ENCODE measurements at regions of chr6 and their contacts with region 1.

Region 1: GRCh38 chr6:131063028-131063763 is at the start of gene EPB41L2:
- DNase-seq: peak; percentile 94
- H3K4me3 ChIP-seq: peak within 1 kb of the TSS; percentile 95
- H3K27ac ChIP-seq: peak within 1 kb of the TSS; percentile 49
- H3K4me1 ChIP-seq: peaks cover 24% of the 10 kb centered on the region
- CTCF ChIP-seq: 0 out of 2 replicates have a peak, but pooled peaks have one; percentile 13
- total RNA-seq, gene EPB41L2: 36.7 and 37.2 TPM in 2 replicates

Region 2: GRCh38 chr6:130958468-130958867 is 104.7 kb before region 1 on chr6:
- CTCF ChIA-PET with region 1: no interaction called
- POLR2A ChIA-PET with region 1: no interaction called
- intact Hi-C with region 1: no loop called
- DNase-seq: no peak
- H3K4me3 ChIP-seq: no peak overlapping the region
- H3K27ac ChIP-seq: no peak overlapping the region
- H3K4me1 ChIP-seq: peaks cover 6% of the 10 kb centered on the region
- CTCF ChIP-seq: no peak

Region 3: GRCh38 chr6:131107151-131107550 is 44.0 kb after region 1 on chr6:
- CTCF ChIA-PET with region 1: no interaction called
- POLR2A ChIA-PET with region 1: no interaction called
- intact Hi-C with region 1: loop called (anchors 5 kb)
- DNase-seq: no peak
- H3K4me3 ChIP-seq: no peak overlapping the region
- H3K27ac ChIP-seq: no peak overlapping the region
- H3K4me1 ChIP-seq: peaks cover 20% of the 10 kb centered on the region
- CTCF ChIP-seq: no peak

Region 4: GRCh38 chr6:131627724-131628682 is 564.8 kb after region 1 on chr6 and contains the start of gene MED23:
- CTCF ChIA-PET with region 1: no interaction called
- POLR2A ChIA-PET with region 1: interaction called, 4 read pairs
- intact Hi-C with region 1: loop called (anchors 2 kb)
- DNase-seq: peak; percentile 95
- H3K4me3 ChIP-seq: peak within 1 kb of the TSS; percentile 87
- H3K27ac ChIP-seq: peak within 1 kb of the TSS; percentile 37
- H3K4me1 ChIP-seq: peaks cover 15% of the 10 kb centered on the region
- CTCF ChIP-seq: peak; percentile 98
- total RNA-seq, gene MED23: 28.2 and 30.2 TPM in 2 replicates

Measured in OCI-LY7 (cell line).